Heart left ventricle (tissue), 16 donors: ENCODE measurements at regions of chr3 and their contacts with region 1.

Region 1: DNA sequence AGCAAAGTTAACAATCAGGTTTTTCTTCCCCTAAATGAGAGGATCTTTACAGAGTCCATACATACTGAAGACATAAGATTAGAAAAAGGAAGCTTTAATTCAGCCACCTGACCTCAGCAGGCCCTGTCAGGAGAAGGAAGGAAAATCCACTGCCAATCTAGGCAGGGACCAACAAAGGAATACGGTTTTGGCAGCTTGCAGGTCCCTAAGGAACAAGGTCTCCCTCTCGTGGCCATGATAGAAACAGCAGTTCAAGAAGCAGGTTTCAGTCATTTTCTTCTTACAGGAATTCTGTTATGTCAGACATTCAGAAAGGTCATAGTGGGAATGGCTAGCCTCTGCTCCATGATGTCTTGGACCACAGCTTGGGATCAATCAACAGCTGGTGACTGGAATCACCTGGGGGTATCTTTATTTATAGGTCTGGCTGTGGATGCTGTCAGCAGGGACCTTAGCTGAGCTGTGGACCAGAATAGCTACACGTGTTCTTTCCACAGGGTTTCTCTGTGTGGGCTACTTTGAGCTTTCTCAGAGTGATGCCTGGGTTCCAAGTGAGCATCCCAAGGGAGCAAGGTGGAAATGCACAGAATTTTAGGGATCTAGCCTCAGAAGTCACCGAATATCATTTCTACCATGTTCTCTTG is 9.4 kb upstream of the CMSS1 start:
- DNase-seq: peak in 2 of 5 donors; percentile 35 to 36
- ATAC-seq: peak in 3 of 4 donors; percentile 52 to 66 (median 60)
- H3K4me3 ChIP-seq: no peak overlapping the region
- H3K27ac ChIP-seq: no peak overlapping the region
- H3K4me1 ChIP-seq: peaks cover 0 to 5% (median 0%) of the 10 kb centered on the region in 12 donors
- H3K27me3 ChIP-seq: no peaks in the 10 kb centered on the region
- CTCF ChIP-seq: peak; percentile 69 to 87 (median 76)
- POLR2A ChIP-seq: no peak

Region 2: DNA sequence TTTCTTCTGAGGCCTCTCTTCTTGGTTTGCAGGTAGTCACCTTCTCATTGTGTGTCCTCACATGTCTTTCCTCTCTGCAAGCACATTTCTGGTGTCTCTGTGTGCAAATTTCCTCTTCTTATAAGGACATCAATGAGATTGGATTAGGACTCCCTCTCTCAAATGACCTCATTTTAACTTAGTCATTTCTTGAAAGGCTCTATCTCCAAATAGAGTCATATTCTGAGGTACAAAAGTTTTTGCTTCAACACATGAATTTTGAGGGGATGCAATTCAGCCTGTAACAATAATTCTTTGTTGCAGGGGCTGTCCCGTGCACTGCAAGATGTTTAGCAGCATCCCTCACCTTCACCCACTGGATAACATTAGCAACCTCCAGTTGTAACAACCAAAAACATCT is 791.8 kb before region 1 on chr3:
- intact Hi-C with region 1: loop called in 1 of 10 experiments (anchors 5 kb)
- DNase-seq: no peak
- ATAC-seq: no peak
- H3K4me3 ChIP-seq: no peak overlapping the region
- H3K27ac ChIP-seq: no peak overlapping the region
- H3K4me1 ChIP-seq: no peaks in the 10 kb centered on the region
- H3K27me3 ChIP-seq: no peaks in the 10 kb centered on the region
- CTCF ChIP-seq: no peak
- POLR2A ChIP-seq: no peak